OCI-LY7 (cell line): ENCODE measurements at regions of chr1 and their contacts with region 1.

Region 1: GRCh38 chr1:224356685-224357625 is at the start of gene CNIH4:
- DNase-seq: peak; percentile 97
- H3K4me3 ChIP-seq: peak within 1 kb of the TSS; percentile 77
- H3K27ac ChIP-seq: peak within 1 kb of the TSS; percentile 31
- H3K4me1 ChIP-seq: peaks cover 11% of the 10 kb centered on the region
- CTCF ChIP-seq: no peak
- total RNA-seq, gene CNIH4: 20.7 and 24.1 TPM in 2 replicates

Region 2: DNA sequence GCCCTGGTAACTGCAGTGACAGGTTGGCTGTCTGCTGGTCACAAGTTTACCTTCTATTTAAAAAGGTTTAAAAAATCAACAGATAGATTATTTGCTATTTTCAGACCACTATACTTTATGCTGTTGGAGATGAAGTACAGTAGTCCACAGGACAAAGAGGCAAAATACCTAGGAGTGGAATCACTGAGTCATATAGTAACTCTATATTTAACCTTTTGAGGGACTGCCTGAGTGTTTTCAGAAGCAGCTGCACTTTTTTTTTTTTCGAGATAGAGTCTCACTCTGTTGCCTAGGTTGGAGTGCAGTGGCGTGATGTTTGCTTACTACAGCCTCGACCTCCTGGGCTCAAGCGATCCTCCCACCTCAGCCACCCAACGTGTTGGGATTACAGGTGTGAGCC is 11.5 kb after region 1 on chr1:
- CTCF ChIA-PET with region 1: no interaction called
- POLR2A ChIA-PET with region 1: interaction called, 13 read pairs
- intact Hi-C with region 1: no loop called
- DNase-seq: no peak
- H3K4me3 ChIP-seq: no peak overlapping the region
- H3K27ac ChIP-seq: no peak overlapping the region
- H3K4me1 ChIP-seq: no peaks in the 10 kb centered on the region
- CTCF ChIP-seq: no peak

Region 3: DNA sequence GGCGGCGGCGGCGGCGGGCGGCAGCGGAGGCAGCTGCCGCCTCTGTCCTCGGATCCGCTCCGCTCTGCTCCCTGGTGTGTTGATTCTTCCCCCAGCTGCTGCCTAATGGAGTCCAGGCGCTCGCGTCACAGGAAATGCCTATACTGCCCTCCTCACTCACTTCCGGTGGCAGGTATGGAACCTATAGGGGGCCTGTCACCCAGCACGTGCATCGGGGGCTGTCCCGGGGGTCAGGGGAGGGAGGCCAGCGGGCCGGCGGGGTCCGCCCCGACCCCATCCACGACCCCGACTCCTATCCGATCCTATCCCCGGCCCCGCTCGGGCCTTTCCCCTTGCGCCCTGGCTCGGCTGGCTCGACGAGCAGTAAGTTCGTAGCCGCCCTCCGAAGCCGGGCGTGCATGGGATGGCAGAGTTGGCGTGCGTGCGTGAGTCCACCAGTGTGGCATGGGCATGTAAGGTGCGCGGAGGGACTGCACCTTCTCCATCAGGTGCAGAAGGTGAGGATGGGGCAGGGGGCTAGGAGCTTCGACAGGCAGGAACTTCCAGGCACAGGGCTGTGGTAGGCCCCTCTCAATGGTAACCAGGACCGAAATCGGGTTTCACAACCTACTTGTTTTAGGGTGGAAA is 77.8 kb after region 1 on chr1 and contains the start of gene WDR26:
- CTCF ChIA-PET with region 1: no interaction called
- POLR2A ChIA-PET with region 1: interaction called, 11 read pairs
- intact Hi-C with region 1: loop called (anchors 5 kb)
- DNase-seq: peak; percentile 93
- H3K4me3 ChIP-seq: peak within 1 kb of the TSS; percentile 75
- H3K27ac ChIP-seq: peak within 1 kb of the TSS; percentile 44
- H3K4me1 ChIP-seq: peaks cover 51% of the 10 kb centered on the region
- CTCF ChIP-seq: no peak; the same call in 1 of the 2 replicates
- total RNA-seq, gene WDR26: 31.3 and 32.0 TPM in 2 replicates